ENCODE measurements at regions of chr12 and their contacts with region 1.

Region 1: GRCh38 chr12:14845350-14845750 is 2.0 kb upstream of the ART4 start:
- DNase-seq: peak; percentile 75
- ATAC-seq: peak; percentile 53
- H3K4me3 ChIP-seq: no peak overlapping the region
- H3K27ac ChIP-seq: no peak overlapping the region
- H3K4me1 ChIP-seq: peaks cover 20% of the 10 kb centered on the region
- H3K27me3 ChIP-seq: no peaks in the 10 kb centered on the region
- CTCF ChIP-seq: peak; percentile 78

Region 2: DNA sequence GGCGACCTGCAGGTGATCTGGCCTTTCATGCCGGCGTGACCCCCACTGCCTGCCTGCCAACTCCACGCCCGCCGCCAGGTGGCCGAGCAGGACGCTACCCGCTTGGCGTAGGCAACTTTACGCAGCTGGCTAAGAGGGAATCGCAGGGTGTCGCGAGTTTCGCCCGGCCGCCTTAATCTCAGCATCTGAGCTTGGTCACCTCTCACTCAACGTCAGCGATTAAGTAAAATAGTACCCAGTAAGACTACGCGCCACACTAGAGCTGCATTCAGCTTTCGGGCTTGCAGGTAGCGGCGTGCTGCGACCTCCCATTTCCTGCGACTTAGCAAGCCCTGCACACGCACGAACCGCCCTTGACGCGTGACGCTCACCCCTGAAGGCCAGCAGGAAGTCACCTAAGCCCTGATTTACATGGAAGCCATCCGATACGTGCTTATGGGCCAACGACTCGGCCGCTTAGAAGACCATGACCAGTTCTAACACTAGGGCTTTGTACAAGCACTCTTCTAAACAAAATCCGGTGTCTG is 75.3 kb before region 1 on chr12:
- CTCF ChIA-PET with region 1: no interaction called
- POLR2A ChIA-PET with region 1: no interaction called
- intact Hi-C with region 1: loop called (anchors 2 kb)
- DNase-seq: peak; percentile 70
- ATAC-seq: peak; percentile 33
- H3K4me3 ChIP-seq: peak overlapping the region; percentile 97
- H3K27ac ChIP-seq: peak overlapping the region; percentile 74
- H3K4me1 ChIP-seq: peaks cover 22% of the 10 kb centered on the region
- H3K27me3 ChIP-seq: no peaks in the 10 kb centered on the region
- CTCF ChIP-seq: peak; percentile 67

Region 3: DNA sequence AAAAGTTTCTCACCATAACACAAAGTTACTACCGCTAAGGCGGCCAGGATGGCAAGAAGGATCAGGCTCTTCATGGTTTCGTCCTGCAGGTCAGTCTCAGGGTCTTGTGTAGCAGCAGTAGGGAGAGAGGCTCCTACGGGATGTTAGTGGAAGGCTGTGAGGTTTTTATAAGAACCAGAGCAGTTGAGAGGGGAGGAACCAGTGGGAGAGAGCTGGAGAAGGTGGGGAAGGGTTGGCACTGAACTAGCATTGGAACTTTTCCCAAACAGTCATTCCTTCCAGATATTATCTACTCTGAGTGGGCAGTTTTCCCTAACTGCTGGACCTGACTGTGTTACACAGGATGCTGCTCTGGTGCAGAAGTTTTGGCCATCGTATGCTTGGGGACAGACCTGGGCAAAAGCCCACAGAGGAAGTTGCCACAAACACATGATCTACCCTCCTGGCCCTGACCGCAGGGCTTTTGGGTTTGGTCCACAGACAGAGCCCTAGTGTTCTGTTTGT is 40.4 kb after region 1 on chr12 and contains the start of gene MGP:
- CTCF ChIA-PET with region 1: interaction called, 4 read pairs
- POLR2A ChIA-PET with region 1: no interaction called
- intact Hi-C with region 1: loop called (anchors 5 kb)
- DNase-seq: peak; percentile 78
- ATAC-seq: peak; percentile 62
- H3K4me3 ChIP-seq: peak within 1 kb of the TSS; percentile 28; the same call in 1 of the 2 replicates
- H3K27ac ChIP-seq: no peak within 1 kb of the TSS
- H3K4me1 ChIP-seq: peaks cover 29% of the 10 kb centered on the region
- H3K27me3 ChIP-seq: no peaks in the 10 kb centered on the region
- CTCF ChIP-seq: no peak
- total RNA-seq, gene MGP: 0.22 and 2.1 TPM in 2 replicates

Region 4: GRCh38 chr12:14901228-14901562 is 55.8 kb after region 1 on chr12:
- CTCF ChIA-PET with region 1: no interaction called
- POLR2A ChIA-PET with region 1: no interaction called
- intact Hi-C with region 1: no loop called
- DNase-seq: peak; percentile 1
- ATAC-seq: no peak
- H3K4me3 ChIP-seq: no peak overlapping the region
- H3K27ac ChIP-seq: no peak overlapping the region
- H3K4me1 ChIP-seq: no peaks in the 10 kb centered on the region
- H3K27me3 ChIP-seq: no peaks in the 10 kb centered on the region
- CTCF ChIP-seq: 0 out of 2 replicates have a peak, but pooled peaks have one; percentile 9

Region 5: DNA sequence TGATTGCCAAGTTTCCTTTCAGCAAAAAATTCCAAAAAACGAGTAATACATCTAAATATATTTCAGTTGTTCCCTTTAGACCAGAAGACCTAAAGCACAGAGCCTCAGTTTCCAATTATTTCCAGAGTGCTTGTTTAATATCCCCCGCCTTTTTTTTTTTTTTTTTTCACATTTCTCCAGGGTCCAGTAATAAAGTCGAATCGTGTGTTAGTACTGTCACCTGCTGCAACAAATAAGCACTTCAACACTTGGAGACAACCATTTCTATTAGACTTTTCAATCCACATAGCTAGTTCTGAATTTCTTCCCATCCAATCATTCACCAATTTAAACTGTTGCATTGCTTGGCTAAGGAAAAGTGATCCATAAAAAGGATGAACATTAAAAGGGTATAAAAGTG is 141.1 kb after region 1 on chr12:
- CTCF ChIA-PET with region 1: no interaction called
- POLR2A ChIA-PET with region 1: no interaction called
- intact Hi-C with region 1: loop called (anchors 2 kb)
- DNase-seq: no peak
- ATAC-seq: no peak
- H3K4me3 ChIP-seq: no peak overlapping the region
- H3K27ac ChIP-seq: no peak overlapping the region
- H3K4me1 ChIP-seq: no peaks in the 10 kb centered on the region
- H3K27me3 ChIP-seq: no peaks in the 10 kb centered on the region
- CTCF ChIP-seq: peak; percentile 26; the same call in 1 of the 2 replicates